ENCODE measurements at regions of chr5 and their contacts with region 1.

Region 1: GRCh38 chr5:77491783-77492652 is at the start of gene WDR41:
- DNase-seq: peak; percentile 75 to 84
- H3K4me3 ChIP-seq: peak within 1 kb of the TSS; percentile 82
- H3K27ac ChIP-seq: peak within 1 kb of the TSS; percentile 39
- H3K4me1 ChIP-seq: peaks cover 5% of the 10 kb centered on the region; the same call in 1 of the 2 replicates
- H3K27me3 ChIP-seq: no peaks in the 10 kb centered on the region
- CTCF ChIP-seq: peak; percentile 83
- total RNA-seq, gene WDR41: 25.2 and 35.8 TPM in 2 replicates

Region 2: DNA sequence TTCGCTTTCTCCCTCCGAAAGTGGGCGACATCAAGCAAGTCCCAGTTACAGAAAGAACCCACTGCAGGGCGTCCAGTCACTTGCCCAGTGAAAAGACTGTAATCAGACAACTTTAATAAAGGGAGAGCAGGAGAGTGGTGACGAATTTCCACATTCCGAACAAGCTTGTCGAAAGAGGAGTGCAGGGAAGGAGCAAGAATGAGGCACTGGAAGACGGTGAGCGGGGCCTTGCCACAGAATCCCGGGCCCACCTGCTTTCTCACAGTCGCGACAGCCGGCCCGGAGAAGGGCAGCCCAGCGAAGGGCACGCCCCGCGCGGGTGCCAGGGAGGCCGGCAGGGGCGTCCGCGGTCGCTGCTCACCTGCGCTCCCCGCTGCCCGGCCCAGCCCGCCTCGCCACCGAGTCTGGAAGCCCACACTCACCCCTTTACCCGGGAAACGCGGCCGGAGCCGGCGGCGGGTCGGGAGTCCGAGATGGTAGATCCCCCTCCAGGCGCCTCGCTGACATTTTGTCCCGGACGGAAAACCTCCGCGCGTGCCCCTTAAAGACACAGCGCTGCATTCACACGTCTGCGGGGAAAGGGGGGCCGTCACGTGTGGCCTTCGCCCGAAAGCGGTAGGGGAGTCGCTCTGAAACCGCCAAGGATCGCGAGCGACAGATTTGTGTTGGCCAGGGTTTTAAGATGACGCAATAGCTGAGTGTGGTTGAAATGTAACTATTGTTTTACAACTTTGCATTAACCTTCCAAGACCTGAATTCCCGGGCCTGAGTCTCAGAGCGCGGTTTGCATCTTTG is 405.1 kb before region 1 on chr5 and contains the start of gene ZBED3:
- CTCF ChIA-PET with region 1: no interaction called
- POLR2A ChIA-PET with region 1: interaction called, 6 read pairs
- intact Hi-C with region 1: loop called (anchors 1 kb)
- DNase-seq: peak; percentile 66 to 73
- H3K4me3 ChIP-seq: peak within 1 kb of the TSS; percentile 65
- H3K27ac ChIP-seq: peak within 1 kb of the TSS; percentile 86
- H3K4me1 ChIP-seq: peaks cover 20% of the 10 kb centered on the region
- H3K27me3 ChIP-seq: no peaks in the 10 kb centered on the region
- CTCF ChIP-seq: no peak; the same call in 1 of the 2 replicates
- total RNA-seq, gene ZBED3: 6.1 and 12.3 TPM in 2 replicates

Region 3: DNA sequence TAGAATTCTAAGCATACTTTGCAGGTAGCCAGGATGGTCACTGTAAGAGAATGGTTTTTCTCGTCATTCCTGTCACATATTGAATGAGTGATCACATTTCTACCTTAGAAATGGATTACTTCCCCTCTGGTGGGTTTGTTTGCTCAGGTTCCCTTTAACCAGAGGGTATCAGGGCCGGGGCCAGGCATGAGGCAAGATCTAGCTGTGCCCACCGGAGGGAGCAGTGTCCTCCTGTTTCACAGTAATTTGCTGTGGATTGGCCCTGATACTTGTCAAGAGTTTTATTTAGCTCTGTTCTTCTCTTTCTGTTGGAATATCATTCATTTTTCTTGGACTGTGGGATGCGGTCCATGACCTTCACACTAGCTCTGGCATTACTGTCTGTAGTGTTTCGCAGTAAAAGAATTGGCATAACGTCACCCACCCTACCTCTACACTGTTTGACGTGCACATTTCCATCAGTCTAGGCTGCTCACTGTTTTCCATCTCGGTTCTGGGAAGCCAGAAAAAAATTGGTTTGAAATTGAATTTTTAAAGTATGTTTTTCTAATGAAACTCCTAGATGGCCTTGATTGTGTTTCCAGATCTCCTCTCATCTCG is 362.5 kb before region 1 on chr5:
- CTCF ChIA-PET with region 1: interaction called, 6 read pairs
- POLR2A ChIA-PET with region 1: no interaction called
- intact Hi-C with region 1: loop called (anchors 5 kb)
- DNase-seq: peak in 1 of 2 experiments; percentile 31
- H3K4me3 ChIP-seq: no peak overlapping the region
- H3K27ac ChIP-seq: no peak overlapping the region
- H3K4me1 ChIP-seq: peaks cover 7% of the 10 kb centered on the region; the same call in 1 of the 2 replicates
- H3K27me3 ChIP-seq: no peaks in the 10 kb centered on the region
- CTCF ChIP-seq: peak; percentile 46; the same call in 1 of the 2 replicates

Region 4: DNA sequence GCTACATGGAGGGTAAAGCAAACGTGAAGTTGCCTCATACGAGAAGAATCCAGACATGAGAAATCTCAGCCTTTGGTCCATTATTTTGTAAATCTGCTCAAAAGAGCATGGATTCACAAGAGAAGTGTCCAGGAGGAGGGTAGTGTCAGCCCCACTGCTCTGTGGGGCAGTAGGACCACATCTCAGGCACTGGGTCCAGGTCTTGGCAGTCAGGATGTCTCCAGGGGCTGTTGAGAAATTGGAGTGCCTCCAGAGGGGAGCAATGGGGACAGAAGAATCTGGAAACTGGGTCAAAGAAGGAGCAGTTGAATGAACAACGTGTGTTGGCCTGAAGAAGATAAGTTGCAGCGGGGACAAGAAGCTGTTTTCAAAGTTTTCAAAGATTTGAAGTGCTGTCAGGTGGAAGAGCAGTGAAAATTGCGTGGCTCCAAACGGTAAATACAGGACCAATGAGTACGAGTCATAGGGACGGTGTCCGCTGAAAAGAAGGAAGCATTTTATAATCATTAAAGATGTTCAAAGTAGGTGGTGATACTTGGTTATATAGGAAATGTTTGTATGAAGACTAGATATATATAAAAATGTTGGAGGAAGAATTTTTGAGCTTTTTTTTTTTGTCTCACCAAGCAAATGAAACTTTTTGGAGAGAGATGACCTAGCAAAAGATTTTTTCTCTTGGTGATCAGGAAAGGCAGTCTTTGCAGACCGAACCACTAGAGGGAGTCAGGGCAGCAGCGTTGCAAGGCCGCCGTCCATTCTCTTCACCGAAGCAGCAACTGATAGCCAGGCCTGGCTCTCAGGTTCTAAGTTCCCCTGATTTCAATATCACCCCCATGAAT is 347.8 kb before region 1 on chr5:
- CTCF ChIA-PET with region 1: interaction called, 8 read pairs
- POLR2A ChIA-PET with region 1: no interaction called
- intact Hi-C with region 1: loop called (anchors 1 kb)
- DNase-seq: peak; percentile 39 to 56
- H3K4me3 ChIP-seq: no peak overlapping the region
- H3K27ac ChIP-seq: no peak overlapping the region
- H3K4me1 ChIP-seq: no peaks in the 10 kb centered on the region
- H3K27me3 ChIP-seq: no peaks in the 10 kb centered on the region
- CTCF ChIP-seq: peak; percentile 86

Region 5: DNA sequence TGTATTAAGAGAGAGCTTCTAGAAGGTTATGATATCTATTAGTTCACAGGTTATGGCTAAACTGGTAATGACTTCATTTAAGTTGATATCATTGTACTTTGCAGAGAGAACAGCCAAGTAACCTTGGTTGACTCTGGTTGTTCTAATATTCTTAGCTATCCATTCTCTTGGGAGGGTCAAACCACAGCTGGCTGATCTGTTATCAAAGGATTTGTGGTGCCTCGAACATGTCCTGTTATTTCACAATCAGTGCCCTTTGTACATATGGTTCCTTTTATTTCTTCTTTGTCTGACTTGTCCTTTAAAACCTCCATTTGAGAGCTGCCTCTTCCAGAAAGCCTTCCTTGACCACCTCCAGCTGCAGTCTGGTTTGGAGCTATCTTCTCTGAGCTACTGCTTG is 219.8 kb before region 1 on chr5:
- CTCF ChIA-PET with region 1: no interaction called
- POLR2A ChIA-PET with region 1: no interaction called
- intact Hi-C with region 1: no loop called
- DNase-seq: no peak
- H3K4me3 ChIP-seq: no peak overlapping the region
- H3K27ac ChIP-seq: no peak overlapping the region
- H3K4me1 ChIP-seq: no peaks in the 10 kb centered on the region
- H3K27me3 ChIP-seq: no peaks in the 10 kb centered on the region
- CTCF ChIP-seq: no peak

Measured in PC-9 (cell line).